CD4-positive, alpha-beta memory T cell (primary cell): ENCODE measurements at regions of chr12 and their contacts with region 1.

Region 1: DNA sequence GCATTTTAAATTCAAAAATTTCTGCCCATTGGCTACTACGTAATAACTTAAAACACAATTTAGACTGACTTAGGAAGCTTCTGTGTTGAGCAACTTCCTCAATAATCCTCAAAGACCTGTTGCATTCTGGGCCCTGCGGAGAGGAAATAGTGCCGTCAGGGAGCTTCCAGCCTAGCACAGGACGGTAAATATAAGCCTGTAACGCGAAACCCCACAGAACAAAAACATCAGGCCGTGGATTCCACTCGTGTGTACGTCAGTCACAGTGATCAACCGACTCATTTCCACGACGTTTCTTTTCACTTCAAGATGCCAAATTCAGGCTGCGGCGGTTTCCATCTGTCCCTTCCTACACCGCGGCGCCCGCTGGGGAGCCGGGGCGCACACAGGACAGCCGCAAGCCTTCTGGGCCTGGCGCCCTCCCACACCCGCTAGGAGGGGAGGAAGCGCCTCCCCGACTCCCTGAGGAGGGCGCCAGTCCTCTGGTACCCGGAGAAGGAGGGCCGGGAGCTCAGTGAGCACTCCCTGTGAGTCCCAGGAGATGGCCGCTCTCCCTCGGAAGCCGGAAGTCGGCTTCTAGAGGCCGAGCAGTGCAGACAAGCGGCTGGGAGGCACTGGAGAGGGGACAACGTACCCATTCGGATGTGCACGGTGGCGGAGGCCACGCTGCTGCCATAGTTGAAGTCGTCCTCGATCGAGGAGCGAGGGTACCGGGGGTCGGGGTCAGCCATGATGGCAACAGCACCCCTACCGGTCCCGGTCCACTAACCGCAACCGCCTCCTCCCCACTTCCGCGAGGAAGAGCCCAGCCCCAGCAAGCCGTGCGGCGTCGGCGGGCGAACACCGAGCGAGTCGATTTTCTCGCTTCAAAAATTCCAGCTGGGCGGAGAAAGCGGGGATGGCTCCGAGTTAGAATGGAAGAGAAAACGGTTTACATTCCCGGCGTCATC is at the start of gene TMBIM4:
- DNase-seq: peak; percentile 86 to 94 (median 87)
- H3K4me3 ChIP-seq: peak within 1 kb of the TSS; percentile 85 to 92
- H3K4me3 Mint-ChIP-seq: peak within 1 kb of the TSS; percentile 91 to 98 (median 96)
- H3K27ac ChIP-seq: peak within 1 kb of the TSS; percentile 98
- H3K27ac Mint-ChIP-seq: peak within 1 kb of the TSS; percentile 95 to 99 (median 98)
- H3K4me1 ChIP-seq: peaks cover 43% of the 10 kb centered on the region
- H3K4me1 Mint-ChIP-seq: peaks cover 33 to 61% (median 48%) of the 10 kb centered on the region in 4 donors
- H3K27me3 ChIP-seq: no peaks in the 10 kb centered on the region
- H3K27me3 Mint-ChIP-seq: peaks cover 2 to 3% of the 10 kb centered on the region in 2 donors
- total RNA-seq, gene TMBIM4: 98.5 to 108 TPM

Region 2: DNA sequence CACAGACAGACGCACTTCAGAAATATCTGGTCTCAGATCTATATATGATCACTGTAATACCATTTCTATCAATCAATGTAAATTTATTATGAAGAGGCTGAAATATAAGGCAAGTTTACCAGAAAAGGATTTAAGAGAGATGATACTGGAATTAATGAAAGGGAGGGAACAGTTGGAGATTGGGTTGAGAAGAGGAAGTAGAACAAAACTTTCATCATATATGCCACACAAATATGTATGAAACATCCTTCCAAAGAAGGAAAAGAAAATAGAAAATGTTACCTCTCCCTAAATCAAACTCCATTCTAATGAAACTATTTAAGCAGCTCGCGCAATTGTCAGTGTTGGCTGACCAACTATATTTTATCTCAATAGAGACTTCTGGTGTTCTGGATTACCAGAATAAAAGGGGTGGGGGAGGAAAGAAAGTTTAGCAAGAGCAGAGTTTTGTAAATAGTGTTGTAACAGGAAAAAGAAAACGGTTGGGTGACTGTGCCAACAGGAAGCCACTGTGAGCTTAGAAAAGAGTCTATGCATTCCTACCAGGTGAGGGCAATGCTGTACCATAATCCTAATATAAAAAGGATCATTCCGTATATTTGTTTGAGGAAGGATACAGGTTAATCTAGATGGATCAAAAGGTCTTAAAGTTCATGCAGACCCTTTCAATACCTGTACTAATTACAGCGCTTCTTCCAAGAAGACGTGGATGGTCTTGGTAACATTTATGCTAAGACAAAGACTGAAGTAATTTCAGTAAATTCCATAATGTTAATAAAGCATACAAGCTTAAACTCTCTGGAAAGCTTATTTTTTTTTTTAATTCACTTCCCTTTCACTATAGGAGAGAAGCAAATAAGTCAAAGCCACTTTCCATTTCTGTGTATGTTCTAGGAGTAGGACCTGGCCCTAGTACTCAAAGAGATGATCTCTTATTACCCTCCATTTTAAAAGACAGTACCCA is 24.4 kb before region 1 on chr12:
- CTCF ChIA-PET with region 1: interaction called, 3 read pairs
- POLR2A ChIA-PET with region 1: interaction called, 8 read pairs
- intact Hi-C with region 1: loop called (anchors 2 kb)
- DNase-seq: no peak
- H3K4me3 ChIP-seq: no peak overlapping the region
- H3K4me3 Mint-ChIP-seq: no peak overlapping the region
- H3K27ac ChIP-seq: no peak overlapping the region
- H3K27ac Mint-ChIP-seq: peak overlapping the region in 6 of 7 donors; percentile 29 to 72 (median 37)
- H3K4me1 ChIP-seq: no peaks in the 10 kb centered on the region
- H3K4me1 Mint-ChIP-seq: peaks cover 4 to 14% (median 8%) of the 10 kb centered on the region in 4 donors
- H3K27me3 ChIP-seq: no peaks in the 10 kb centered on the region
- H3K27me3 Mint-ChIP-seq: no peaks in the 10 kb centered on the region

Region 3: DNA sequence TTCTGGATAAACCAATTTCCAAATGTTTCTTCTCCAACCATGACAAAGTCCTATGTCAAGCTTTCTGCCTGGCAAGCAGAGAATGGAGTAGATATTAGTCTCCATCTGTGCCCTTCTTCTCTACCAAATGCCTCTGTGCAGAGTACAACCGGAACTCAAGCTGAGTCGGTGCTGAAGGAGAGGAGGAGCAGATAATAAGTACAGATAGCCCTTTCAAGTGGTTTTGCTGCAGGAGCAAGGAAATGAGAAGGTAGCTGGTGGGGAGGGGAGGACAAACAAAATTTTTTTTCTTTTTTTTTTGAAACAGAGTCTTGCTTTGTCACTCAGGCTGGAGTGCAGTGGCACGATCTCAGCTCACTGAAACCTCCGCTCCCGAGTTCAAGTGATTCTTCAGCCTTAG is 118.6 kb after region 1 on chr12:
- CTCF ChIA-PET with region 1: no interaction called
- POLR2A ChIA-PET with region 1: interaction called, 10 read pairs
- intact Hi-C with region 1: loop called (anchors 5 kb)
- DNase-seq: peak; percentile 86 to 92 (median 89)
- H3K4me3 ChIP-seq: peak overlapping the region; percentile 21 to 35
- H3K4me3 Mint-ChIP-seq: peak overlapping the region; percentile 36 to 79 (median 70)
- H3K27ac ChIP-seq: peak overlapping the region; percentile 35
- H3K27ac Mint-ChIP-seq: peak overlapping the region; percentile 61 to 94 (median 85)
- H3K4me1 ChIP-seq: peaks cover 100% of the 10 kb centered on the region
- H3K4me1 Mint-ChIP-seq: peaks cover 72 to 96% (median 83%) of the 10 kb centered on the region in 4 donors
- H3K27me3 ChIP-seq: no peaks in the 10 kb centered on the region
- H3K27me3 Mint-ChIP-seq: no peaks in the 10 kb centered on the region